HepG2 (cell line): ENCODE measurements at regions of chr16 and their contacts with region 1.

Region 1: GRCh38 chr16:58563235-58563634 is 47.9 kb downstream of the SETD6 start:
- DNase-seq: no peak
- ATAC-seq: no peak
- H3K4me3 ChIP-seq: no peak overlapping the region
- H3K27ac ChIP-seq: no peak overlapping the region
- H3K4me1 ChIP-seq: no peaks in the 10 kb centered on the region
- H3K27me3 ChIP-seq: no peaks in the 10 kb centered on the region
- CTCF ChIP-seq: no peak
- EP300 ChIP-seq: no peak
- POLR2A ChIP-seq: no peak
- RAD21 ChIP-seq: no peak

Region 2: GRCh38 chr16:58392215-58393137 is 170.8 kb before region 1 on chr16 and contains the start of gene GINS3:
- CTCF ChIA-PET with region 1: no interaction called
- POLR2A ChIA-PET with region 1: no interaction called
- in situ Hi-C with region 1: no loop called
- intact Hi-C with region 1: no loop called
- DNase-seq: peak; percentile 86
- ATAC-seq: peak; percentile 99
- H3K4me3 ChIP-seq: peak within 1 kb of the TSS; percentile 85 to 97 (median 95)
- H3K27ac ChIP-seq: peak within 1 kb of the TSS; percentile 76
- H3K4me1 ChIP-seq: peaks cover 29% of the 10 kb centered on the region
- H3K27me3 ChIP-seq: no peaks in the 10 kb centered on the region; a peak in 1 of 5 replicates
- CTCF ChIP-seq: no peak
- EP300 ChIP-seq: peak in 1 of 2 experiments; percentile 43; a peak in 1 of 4 replicates
- POLR2A ChIP-seq: peak in 1 of 2 experiments; percentile 73; a peak in 3 of 4 replicates
- RAD21 ChIP-seq: no peak; the same call in 1 of the 2 replicates
- total RNA-seq, gene GINS3: 19.3 and 28.4 TPM in 2 replicates

Region 3: GRCh38 chr16:58533751-58534470 is 29.3 kb before region 1 on chr16:
- CTCF ChIA-PET with region 1: no interaction called
- POLR2A ChIA-PET with region 1: no interaction called
- in situ Hi-C with region 1: loop called (anchors 5 kb)
- intact Hi-C with region 1: no loop called
- DNase-seq: no peak
- ATAC-seq: no peak
- H3K4me3 ChIP-seq: no peak overlapping the region
- H3K27ac ChIP-seq: no peak overlapping the region
- H3K4me1 ChIP-seq: no peaks in the 10 kb centered on the region
- H3K27me3 ChIP-seq: no peaks in the 10 kb centered on the region
- CTCF ChIP-seq: no peak
- EP300 ChIP-seq: no peak
- POLR2A ChIP-seq: no peak
- RAD21 ChIP-seq: no peak

Region 4: GRCh38 chr16:58661199-58661830 is 98.1 kb after region 1 on chr16:
- CTCF ChIA-PET with region 1: no interaction called
- POLR2A ChIA-PET with region 1: no interaction called
- in situ Hi-C with region 1: no loop called
- intact Hi-C with region 1: loop called (anchors 5 kb)
- DNase-seq: peak; percentile 85
- ATAC-seq: peak; percentile 89
- H3K4me3 ChIP-seq: no peak overlapping the region
- H3K27ac ChIP-seq: no peak overlapping the region
- H3K4me1 ChIP-seq: peaks cover 23% of the 10 kb centered on the region
- H3K27me3 ChIP-seq: no peaks in the 10 kb centered on the region
- CTCF ChIP-seq: peak; percentile 93
- EP300 ChIP-seq: no peak
- POLR2A ChIP-seq: no peak
- RAD21 ChIP-seq: peak; percentile 91